ENCODE measurements at regions of chr12 and their contacts with region 1.

Region 1: GRCh38 chr12:42144408-42145196 is at the start of gene GXYLT1:
- DNase-seq: peak; percentile 96 to 97
- ATAC-seq: peak; percentile 98
- H3K4me3 ChIP-seq: peak within 1 kb of the TSS; percentile 57 to 69
- H3K27ac ChIP-seq: peak within 1 kb of the TSS in 1 of 2 donors; percentile 50
- H3K4me1 ChIP-seq: peaks cover 0 to 3% of the 10 kb centered on the region in 2 donors
- H3K27me3 ChIP-seq: no peaks in the 10 kb centered on the region
- total RNA-seq, gene GXYLT1: 11.1 to 13.5 TPM

Region 2: GRCh38 chr12:42237052-42237852 is 92.7 kb after region 1 on chr12:
- intact Hi-C with region 1: loop called in 1 of 2 experiments (anchors 5 kb)
- DNase-seq: peak; percentile 86 to 90
- ATAC-seq: peak; percentile 73
- H3K4me3 ChIP-seq: peak overlapping the region; percentile 99 to 100
- H3K27ac ChIP-seq: peak overlapping the region; percentile 9 to 99
- H3K4me1 ChIP-seq: peaks cover 0 to 5% of the 10 kb centered on the region in 2 donors
- H3K27me3 ChIP-seq: no peaks in the 10 kb centered on the region

Region 3: DNA sequence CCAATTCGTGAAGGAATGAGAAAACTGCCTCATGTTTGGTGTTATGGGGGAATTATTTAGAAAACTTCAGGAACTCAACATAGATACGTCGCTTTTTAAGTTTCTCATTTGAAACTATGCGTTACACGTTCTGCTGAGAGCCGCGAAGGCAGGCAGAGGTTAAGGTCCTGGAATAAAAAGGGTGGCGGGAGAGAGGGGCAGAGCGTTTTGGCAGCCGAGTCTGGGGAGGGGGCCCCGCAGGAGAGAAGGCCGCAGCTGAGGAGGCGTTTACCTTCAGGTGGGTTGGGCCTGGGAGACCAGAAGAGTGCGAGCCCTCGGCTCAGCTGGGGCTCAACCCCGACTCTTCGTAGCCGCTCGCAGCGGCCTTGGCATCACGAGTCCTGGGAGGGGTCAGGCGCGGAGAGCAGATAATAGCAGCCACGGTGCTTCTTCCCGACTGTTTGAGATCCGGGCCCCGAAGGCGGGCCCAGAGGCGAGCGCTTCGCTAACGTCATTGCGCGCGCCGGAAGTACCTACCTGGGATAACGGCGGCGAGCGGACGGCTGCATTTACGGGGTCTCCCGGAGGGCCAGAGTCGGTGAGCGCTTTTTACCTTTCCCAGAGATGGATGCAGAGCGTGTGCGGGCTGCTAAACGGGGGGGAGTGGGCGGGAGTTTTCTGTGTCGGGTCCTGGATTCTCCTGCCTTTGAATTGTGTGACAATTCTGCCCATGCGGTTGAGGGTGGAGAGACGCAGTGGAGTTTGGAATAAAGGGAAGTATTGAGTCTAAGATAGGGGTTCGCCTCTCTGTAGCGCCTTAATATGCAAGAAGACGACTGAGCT is 181.3 kb after region 1 on chr12 and contains the starts of genes PPHLN1 and ZCRB1:
- intact Hi-C with region 1: loop called in 1 of 2 experiments (anchors 5 kb)
- DNase-seq: peak; percentile 88 to 94
- ATAC-seq: peak; percentile 95
- H3K4me3 ChIP-seq: peak within 1 kb of the TSS; percentile 82 to 97
- H3K27ac ChIP-seq: peak within 1 kb of the TSS; percentile 44 to 88
- H3K4me1 ChIP-seq: peaks cover 6 to 7% of the 10 kb centered on the region in 2 donors
- H3K27me3 ChIP-seq: no peaks in the 10 kb centered on the region
- total RNA-seq, gene PPHLN1: 50.0 to 52.8 TPM
- total RNA-seq, gene ZCRB1: 36.2 to 44.4 TPM

Region 4: DNA sequence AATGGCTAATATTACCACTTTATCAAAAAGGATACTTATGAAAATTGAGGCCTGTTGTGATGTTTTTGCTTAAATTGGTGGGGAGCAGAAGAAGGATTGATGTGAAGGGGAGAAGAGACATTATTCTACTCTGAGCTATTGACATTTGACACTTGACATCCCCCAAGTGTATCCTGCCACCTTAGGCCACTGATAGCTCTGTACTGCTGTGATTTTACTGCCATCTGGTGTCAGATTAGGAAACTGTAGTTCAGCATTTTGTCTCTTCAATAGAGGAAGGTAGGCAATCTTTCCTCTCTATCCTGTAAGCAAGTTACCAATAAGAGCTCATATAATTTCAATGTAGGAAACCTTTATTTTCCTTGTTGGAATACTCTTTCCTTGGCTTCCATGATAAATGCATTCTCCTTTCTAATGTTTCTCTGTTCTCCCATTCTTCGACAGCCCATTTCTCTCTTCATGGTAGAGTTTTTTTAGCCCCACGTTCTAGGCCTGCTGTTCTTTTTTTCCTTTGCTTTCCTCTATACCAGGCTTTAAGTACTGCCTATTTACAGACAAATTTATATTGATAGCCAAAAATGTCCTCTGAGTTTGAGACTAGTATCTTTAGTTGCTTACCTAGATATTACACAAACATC is 227.7 kb after region 1 on chr12:
- intact Hi-C with region 1: no loop called
- DNase-seq: no peak
- ATAC-seq: peak; percentile 63
- H3K4me3 ChIP-seq: no peak overlapping the region
- H3K27ac ChIP-seq: no peak overlapping the region
- H3K4me1 ChIP-seq: no peaks in the 10 kb centered on the region
- H3K27me3 ChIP-seq: no peaks in the 10 kb centered on the region